ENCODE measurements at regions of chr15 and their contacts with region 1.

Region 1: GRCh38 chr15:63188926-63189871 is at the start of gene RAB8B:
- DNase-seq: peak; percentile 94
- H3K4me3 Mint-ChIP-seq: peak within 1 kb of the TSS; percentile 74
- H3K27ac Mint-ChIP-seq: peak within 1 kb of the TSS; percentile 20
- H3K4me1 Mint-ChIP-seq: peaks cover 40% of the 10 kb centered on the region
- H3K27me3 Mint-ChIP-seq: no peaks in the 10 kb centered on the region
- CTCF ChIP-seq: no peak
- total RNA-seq, gene RAB8B: 11.7 and 15.6 TPM in 2 replicates

Region 2: GRCh38 chr15:63107895-63108546 is 81.2 kb before region 1 on chr15:
- CTCF ChIA-PET with region 1: no interaction called
- POLR2A ChIA-PET with region 1: no interaction called
- intact Hi-C with region 1: no loop called
- DNase-seq: peak; percentile 92
- H3K4me3 Mint-ChIP-seq: no peak overlapping the region
- H3K27ac Mint-ChIP-seq: no peak overlapping the region
- H3K4me1 Mint-ChIP-seq: peaks cover 9% of the 10 kb centered on the region
- H3K27me3 Mint-ChIP-seq: no peaks in the 10 kb centered on the region
- CTCF ChIP-seq: no peak

Region 3: GRCh38 chr15:63203451-63204090 is 14.4 kb after region 1 on chr15:
- CTCF ChIA-PET with region 1: interaction called, 4 read pairs
- POLR2A ChIA-PET with region 1: interaction called, 12 read pairs
- intact Hi-C with region 1: no loop called
- DNase-seq: no peak
- H3K4me3 Mint-ChIP-seq: no peak overlapping the region
- H3K27ac Mint-ChIP-seq: no peak overlapping the region
- H3K4me1 Mint-ChIP-seq: no peaks in the 10 kb centered on the region
- H3K27me3 Mint-ChIP-seq: no peaks in the 10 kb centered on the region
- CTCF ChIP-seq: no peak

Region 4: GRCh38 chr15:63246691-63247464 is 57.7 kb after region 1 on chr15:
- CTCF ChIA-PET with region 1: no interaction called
- POLR2A ChIA-PET with region 1: interaction called, 10 read pairs
- intact Hi-C with region 1: no loop called
- DNase-seq: peak; percentile 93
- H3K4me3 Mint-ChIP-seq: peak overlapping the region; percentile 10
- H3K27ac Mint-ChIP-seq: peak overlapping the region; percentile 82
- H3K4me1 Mint-ChIP-seq: peaks cover 32% of the 10 kb centered on the region
- H3K27me3 Mint-ChIP-seq: no peaks in the 10 kb centered on the region
- CTCF ChIP-seq: no peak

Region 5: DNA sequence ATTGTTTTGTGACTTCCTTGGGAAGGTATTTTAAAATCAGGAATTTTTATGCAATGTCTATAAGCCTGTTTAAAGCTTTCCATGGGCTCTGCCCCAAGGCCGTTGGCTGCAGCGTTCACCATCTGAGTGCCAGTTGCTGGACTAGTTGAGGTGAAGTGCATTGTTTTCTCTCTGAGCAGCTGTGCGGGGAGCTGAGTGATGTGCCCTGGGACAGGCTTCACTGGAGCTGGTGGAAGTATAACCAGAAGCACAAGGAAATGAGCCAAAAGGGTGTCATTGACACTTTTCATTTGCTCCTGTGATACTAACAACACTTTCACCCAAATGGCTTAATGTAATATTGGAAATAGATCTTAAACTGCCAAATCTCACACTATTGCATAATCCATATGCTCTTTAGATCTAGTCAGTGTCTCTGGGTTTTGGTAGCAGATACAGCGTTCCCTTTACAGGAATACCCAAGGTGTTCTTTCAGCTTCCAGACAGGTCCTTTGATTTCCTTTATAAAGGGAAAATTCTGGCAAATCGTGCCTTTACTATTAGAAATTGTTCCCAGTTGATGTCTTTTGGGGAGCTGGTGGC is 117.4 kb after region 1 on chr15:
- CTCF ChIA-PET with region 1: no interaction called
- POLR2A ChIA-PET with region 1: no interaction called
- intact Hi-C with region 1: no loop called
- DNase-seq: no peak
- H3K4me3 Mint-ChIP-seq: no peak overlapping the region
- H3K27ac Mint-ChIP-seq: no peak overlapping the region
- H3K4me1 Mint-ChIP-seq: no peaks in the 10 kb centered on the region
- H3K27me3 Mint-ChIP-seq: no peaks in the 10 kb centered on the region
- CTCF ChIP-seq: no peak

Region 6: DNA sequence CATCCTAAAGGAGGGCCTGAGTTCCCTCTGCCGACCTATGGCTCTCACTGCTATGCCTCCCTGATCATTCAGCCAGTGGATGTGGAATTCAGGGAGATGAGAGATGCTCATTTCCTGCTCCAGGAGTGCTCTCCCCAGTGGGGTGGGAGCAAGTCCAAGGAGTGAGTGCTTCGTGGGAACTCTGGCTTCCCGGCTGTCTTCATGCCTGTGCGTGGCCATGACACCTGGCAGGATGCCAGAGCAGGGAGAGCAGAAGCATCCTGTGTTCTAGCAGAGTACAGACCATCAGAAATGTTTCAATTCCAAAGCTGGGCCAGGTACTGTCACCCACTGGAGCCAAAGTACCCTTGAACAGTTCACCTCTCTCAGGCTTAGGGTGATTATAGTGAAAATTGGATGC is 133.3 kb after region 1 on chr15:
- CTCF ChIA-PET with region 1: no interaction called
- POLR2A ChIA-PET with region 1: no interaction called
- intact Hi-C with region 1: no loop called
- DNase-seq: peak; percentile 29
- H3K4me3 Mint-ChIP-seq: no peak overlapping the region
- H3K27ac Mint-ChIP-seq: no peak overlapping the region
- H3K4me1 Mint-ChIP-seq: no peaks in the 10 kb centered on the region
- H3K27me3 Mint-ChIP-seq: no peaks in the 10 kb centered on the region
- CTCF ChIP-seq: no peak

Measured in MCF 10A (cell line).